IMR-90 (cell line): ENCODE measurements at regions of chr13 and their contacts with region 1.

Region 1: GRCh38 chr13:41822560-41822959 is 138.3 kb downstream of the VWA8 start:
- DNase-seq: no peak
- ATAC-seq: no peak
- H3K4me3 ChIP-seq: no peak overlapping the region
- H3K27ac ChIP-seq: no peak overlapping the region
- H3K4me1 ChIP-seq: peaks cover 4% of the 10 kb centered on the region
- H3K27me3 ChIP-seq: no peaks in the 10 kb centered on the region
- CTCF ChIP-seq: no peak
- POLR2A ChIP-seq: no peak
- RAD21 ChIP-seq: no peak

Region 2: DNA sequence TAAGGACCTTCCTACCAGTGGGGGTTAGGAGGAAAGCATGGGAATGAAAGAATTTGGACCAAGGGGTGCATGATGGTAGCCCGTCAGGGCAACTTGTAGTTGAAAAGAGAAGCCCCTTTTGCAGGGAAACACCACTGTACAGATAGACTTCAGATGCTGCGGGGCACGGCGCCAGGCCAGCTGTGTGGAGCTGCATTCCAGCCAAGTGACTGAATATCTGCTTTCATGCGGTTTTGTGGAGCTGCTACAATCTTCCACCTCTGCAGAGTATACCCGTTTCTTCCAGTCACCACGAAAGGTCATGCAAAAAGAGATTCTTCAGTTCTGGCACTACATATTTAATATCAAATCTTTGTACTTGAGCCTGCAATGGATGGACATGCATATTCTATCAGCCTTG is 260.5 kb before region 1 on chr13:
- CTCF ChIA-PET with region 1: no interaction called
- POLR2A ChIA-PET with region 1: interaction called, 14 read pairs
- dilution Hi-C with region 1: no loop called
- in situ Hi-C with region 1: no loop called
- intact Hi-C with region 1: no loop called
- DNase-seq: peak; percentile 92
- ATAC-seq: peak; percentile 77
- H3K4me3 ChIP-seq: no peak overlapping the region
- H3K27ac ChIP-seq: no peak overlapping the region
- H3K4me1 ChIP-seq: peaks cover 23% of the 10 kb centered on the region
- H3K27me3 ChIP-seq: no peaks in the 10 kb centered on the region
- CTCF ChIP-seq: no peak
- POLR2A ChIP-seq: no peak
- RAD21 ChIP-seq: 0 out of 2 replicates have a peak, but pooled peaks have one; percentile 26

Region 3: DNA sequence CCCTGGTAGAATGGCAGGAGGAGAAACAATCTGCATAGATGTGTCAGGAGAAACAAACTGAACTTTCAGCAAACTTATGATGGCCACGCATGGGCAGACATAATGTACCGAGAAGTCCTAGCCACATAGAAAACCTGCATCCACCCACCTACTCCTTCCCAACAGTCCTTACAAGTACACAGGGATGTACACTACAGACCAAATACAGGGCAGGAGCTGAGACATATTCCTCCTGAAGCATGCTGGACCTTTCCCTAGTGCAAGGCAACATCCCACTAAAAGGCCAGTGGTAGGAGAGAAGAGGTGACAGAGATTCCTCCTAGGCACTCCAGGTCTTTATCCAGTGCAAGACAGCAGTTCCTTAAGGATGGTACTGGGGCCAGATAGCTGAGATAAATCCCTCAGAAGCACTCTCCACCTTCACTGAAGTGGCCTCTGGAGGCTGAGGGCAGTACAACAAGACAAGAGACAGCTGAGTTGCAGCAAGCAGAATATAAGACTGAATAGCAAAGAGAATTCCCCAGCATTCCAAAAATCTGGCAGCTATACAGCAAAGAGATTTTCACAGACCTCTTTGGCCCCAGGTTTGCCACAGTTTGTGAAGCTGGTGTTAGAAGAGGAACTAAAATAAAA is 120.0 kb after region 1 on chr13:
- CTCF ChIA-PET with region 1: no interaction called
- POLR2A ChIA-PET with region 1: no interaction called
- dilution Hi-C with region 1: no loop called
- in situ Hi-C with region 1: no loop called
- intact Hi-C with region 1: no loop called
- DNase-seq: peak; percentile 74
- ATAC-seq: peak; percentile 97
- H3K4me3 ChIP-seq: no peak overlapping the region
- H3K27ac ChIP-seq: no peak overlapping the region
- H3K4me1 ChIP-seq: peaks cover 5% of the 10 kb centered on the region; the same call in 1 of the 2 replicates
- H3K27me3 ChIP-seq: no peaks in the 10 kb centered on the region
- CTCF ChIP-seq: peak; percentile 54
- POLR2A ChIP-seq: no peak
- RAD21 ChIP-seq: peak; percentile 51